ENCODE measurements at regions of chr15 and their contacts with region 1.

Region 1: GRCh38 chr15:52645916-52646315 is 33.3 kb downstream of the ATOSA start:
- DNase-seq: no peak
- ATAC-seq: no peak
- H3K4me3 ChIP-seq: no peak overlapping the region
- H3K4me1 ChIP-seq: no peaks in the 10 kb centered on the region
- CTCF ChIP-seq: no peak

Region 2: DNA sequence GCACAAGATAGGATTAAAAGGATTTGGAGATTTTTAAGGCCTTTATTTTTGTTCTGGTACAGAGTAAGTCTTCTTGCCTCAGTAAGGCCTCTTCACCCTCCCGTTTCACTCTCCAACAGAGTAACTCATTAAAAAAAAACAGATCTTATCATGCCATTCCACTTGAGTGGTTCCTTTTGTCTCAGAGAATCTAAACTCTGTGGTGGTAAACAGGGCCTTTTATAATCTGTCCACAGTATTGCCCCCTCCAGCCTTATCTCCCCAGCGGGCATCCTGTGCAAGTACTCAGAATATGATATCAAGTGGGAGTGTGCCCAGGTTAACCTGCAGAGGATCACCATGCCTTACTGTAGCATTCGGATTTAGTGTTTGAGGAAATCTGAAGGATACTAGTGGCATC is 53.5 kb after region 1 on chr15:
- intact Hi-C with region 1: loop called in 1 of 2 experiments (anchors 2 kb)
- DNase-seq: no peak
- ATAC-seq: no peak
- H3K4me3 ChIP-seq: no peak overlapping the region
- H3K4me1 ChIP-seq: no peaks in the 10 kb centered on the region
- CTCF ChIP-seq: no peak

Region 3: DNA sequence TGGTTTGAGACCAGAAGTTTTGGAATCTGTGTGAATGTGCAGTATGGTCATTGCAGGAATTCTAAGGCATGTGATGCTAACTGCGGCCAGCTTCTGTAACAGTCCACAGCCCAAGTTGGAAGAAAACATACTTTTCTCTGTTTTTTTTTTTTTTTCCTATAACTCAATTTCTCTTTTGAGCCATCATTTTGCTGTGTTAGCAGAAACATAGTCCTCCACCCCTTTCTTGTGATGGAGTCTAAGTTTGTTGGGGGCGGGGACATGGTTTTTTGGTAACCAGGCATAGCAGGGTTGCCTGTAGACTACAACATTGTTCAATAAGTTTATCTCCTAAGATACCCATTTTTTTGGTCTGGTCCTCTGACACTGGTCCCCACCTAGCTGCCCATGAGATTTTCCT is 367.4 kb after region 1 on chr15:
- intact Hi-C with region 1: no loop called
- DNase-seq: no peak
- ATAC-seq: no peak
- H3K4me3 ChIP-seq: no peak overlapping the region
- H3K4me1 ChIP-seq: no peaks in the 10 kb centered on the region
- CTCF ChIP-seq: no peak

Measured in mucosa of descending colon (tissue), 3 donors.